H1 (cell line): ENCODE measurements at regions of chr7 and their contacts with region 1.

Region 1: GRCh38 chr7:105399043-105399725 is 10.5 kb upstream of the SRPK2 start:
- DNase-seq: no peak
- H3K4me3 ChIP-seq: no peak overlapping the region
- H3K27ac ChIP-seq: no peak overlapping the region
- H3K4me1 ChIP-seq: no peaks in the 10 kb centered on the region
- H3K27me3 ChIP-seq: no peaks in the 10 kb centered on the region
- CTCF ChIP-seq: no peak
- EP300 ChIP-seq: no peak
- POLR2A ChIP-seq: no peak
- RAD21 ChIP-seq: no peak

Region 2: DNA sequence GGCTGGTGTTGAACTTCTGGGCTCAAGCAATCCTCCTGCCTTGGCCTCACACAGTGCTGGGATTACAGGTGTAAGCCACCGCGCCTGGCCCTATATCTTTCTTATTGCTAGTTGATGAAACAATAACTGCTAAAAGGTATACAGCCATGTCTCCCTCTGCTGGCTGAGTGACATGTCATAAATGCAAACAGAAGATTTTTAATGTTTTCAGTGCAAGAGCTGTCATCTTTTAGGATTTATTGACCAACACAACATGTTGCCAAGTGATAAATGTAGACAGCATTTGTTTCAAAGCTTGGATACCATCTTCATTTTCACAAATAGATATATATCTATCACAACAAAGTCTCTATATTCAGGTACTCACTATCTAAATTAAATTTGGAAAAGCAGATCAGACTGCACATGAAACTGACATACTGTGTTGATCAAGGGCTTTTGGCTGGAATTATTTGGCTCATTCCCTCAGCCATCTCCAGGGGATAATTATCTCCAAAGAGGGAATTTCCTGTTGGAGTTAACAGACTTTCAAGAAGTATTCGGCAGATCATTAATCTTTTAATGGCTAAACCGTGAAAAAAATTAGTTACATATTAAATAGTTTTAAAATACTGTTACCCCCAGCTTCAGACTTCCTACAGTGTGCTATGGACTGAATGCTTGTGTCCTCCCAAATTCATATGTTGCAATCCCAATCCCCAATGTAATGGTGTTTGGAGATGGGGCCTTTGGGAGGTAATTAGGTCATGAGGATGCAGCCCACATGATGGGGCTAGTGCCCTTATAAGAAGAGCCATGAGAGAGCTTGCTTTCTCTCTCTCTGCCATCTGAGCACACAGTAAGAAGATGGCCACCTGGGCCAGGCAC is 30.8 kb after region 1 on chr7:
- CTCF ChIA-PET with region 1: interaction called, 13 read pairs
- POLR2A ChIA-PET with region 1: no interaction called
- DNase-seq: no peak
- H3K4me3 ChIP-seq: no peak overlapping the region
- H3K27ac ChIP-seq: no peak overlapping the region
- H3K4me1 ChIP-seq: no peaks in the 10 kb centered on the region
- H3K27me3 ChIP-seq: no peaks in the 10 kb centered on the region
- CTCF ChIP-seq: peak in 2 of 3 experiments; percentile 26 to 37; a peak in 3 of 4 replicates
- EP300 ChIP-seq: no peak
- POLR2A ChIP-seq: no peak
- RAD21 ChIP-seq: peak; percentile 53 to 65

Region 3: DNA sequence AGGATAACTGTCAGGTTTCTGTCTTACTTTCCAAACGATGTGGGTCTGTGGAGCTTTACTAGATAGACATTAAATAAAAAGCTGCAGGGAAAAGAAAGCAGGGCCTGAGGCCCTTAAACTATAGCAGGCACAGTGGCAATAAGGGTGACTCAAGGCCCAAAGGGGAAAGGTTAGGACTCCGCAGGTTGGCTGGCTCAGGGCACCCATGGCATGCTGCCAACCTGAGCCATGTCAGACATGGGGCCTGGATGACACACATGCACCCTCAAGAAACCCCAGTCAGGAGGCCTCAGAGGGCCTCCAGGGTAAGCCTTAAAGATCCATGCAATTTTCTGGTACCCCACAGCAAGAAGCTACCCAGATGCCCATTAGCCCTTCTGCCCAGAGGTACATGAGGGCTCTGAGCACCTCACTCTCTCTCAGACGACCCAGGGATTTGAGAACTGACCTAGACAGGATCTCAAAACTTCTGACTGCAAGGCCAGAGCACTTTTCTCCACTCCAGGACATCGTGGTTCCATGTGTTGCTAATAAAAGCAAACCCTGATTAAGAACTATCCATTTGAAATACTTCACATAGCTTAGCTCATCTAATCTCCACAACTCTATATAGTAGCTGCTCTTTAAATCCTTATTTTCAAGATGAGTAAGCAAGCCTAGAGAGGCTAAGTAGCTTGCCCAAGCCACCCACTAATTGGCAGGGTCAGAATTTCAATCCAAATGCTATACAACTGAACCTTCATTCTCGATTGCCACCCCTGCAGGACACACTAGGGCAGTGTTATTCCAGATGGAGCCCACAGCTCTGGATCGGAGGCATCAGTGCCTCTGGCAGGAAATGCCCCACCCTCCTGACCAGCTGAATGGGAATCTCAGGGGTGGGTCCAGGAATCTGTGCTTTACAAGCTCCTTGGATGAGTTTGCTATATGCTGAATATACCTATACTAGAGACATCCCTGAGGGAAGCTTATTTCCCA is 314.6 kb after region 1 on chr7:
- CTCF ChIA-PET with region 1: no interaction called
- POLR2A ChIA-PET with region 1: no interaction called
- DNase-seq: no peak
- H3K4me3 ChIP-seq: no peak overlapping the region
- H3K27ac ChIP-seq: no peak overlapping the region
- H3K4me1 ChIP-seq: peaks cover 0 to 7% (median 3%) of the 10 kb centered on the region in 4 experiments; a peak in 4 of 7 replicates
- H3K27me3 ChIP-seq: no peaks in the 10 kb centered on the region
- CTCF ChIP-seq: no peak
- EP300 ChIP-seq: no peak
- POLR2A ChIP-seq: no peak
- RAD21 ChIP-seq: no peak